HEK293 (cell line): ENCODE measurements at regions of chr1 and their contacts with region 1.

Region 1: GRCh38 chr1:114346480-114347029 is 164.4 kb downstream of the TRIM33 start:
- H3K4me3 ChIP-seq: peak overlapping the region; percentile 31
- H3K27ac ChIP-seq: no peak overlapping the region
- H3K4me1 ChIP-seq: no peaks in the 10 kb centered on the region
- CTCF ChIP-seq: peak; percentile 100

Region 2: DNA sequence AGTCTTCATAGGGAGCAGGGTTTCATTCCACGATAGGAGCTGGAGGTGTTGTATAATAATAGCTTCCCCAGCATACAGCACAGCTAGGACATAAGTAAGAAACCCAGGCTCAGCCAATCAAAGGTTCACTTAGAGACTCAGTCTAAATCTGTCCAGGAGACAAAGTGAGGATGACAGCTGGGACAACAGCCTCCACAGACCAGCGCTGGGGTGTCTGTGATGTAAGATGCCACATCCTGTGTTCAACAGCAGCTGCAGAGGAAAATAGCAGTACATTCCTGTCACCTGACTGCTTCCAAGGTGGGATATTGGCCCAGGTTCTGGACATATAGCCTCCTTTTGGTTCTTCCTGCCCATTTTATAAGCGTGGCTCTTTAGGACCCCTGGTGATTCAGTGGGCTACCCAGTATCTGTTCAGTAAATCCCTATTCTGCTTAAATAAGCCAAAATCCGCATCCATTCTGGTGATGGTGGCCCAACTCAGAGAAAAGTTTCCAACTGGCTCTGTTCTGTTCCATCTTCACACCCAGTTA is 16.0 kb before region 1 on chr1:
- CTCF ChIA-PET with region 1: interaction called, 16 read pairs
- POLR2A ChIA-PET with region 1: no interaction called
- H3K4me3 ChIP-seq: no peak overlapping the region
- H3K27ac ChIP-seq: no peak overlapping the region
- H3K4me1 ChIP-seq: no peaks in the 10 kb centered on the region
- CTCF ChIP-seq: no peak

Region 3: GRCh38 chr1:114336360-114336759 is 10.2 kb before region 1 on chr1:
- CTCF ChIA-PET with region 1: interaction called, 18 read pairs
- POLR2A ChIA-PET with region 1: no interaction called
- H3K4me3 ChIP-seq: no peak overlapping the region
- H3K27ac ChIP-seq: no peak overlapping the region
- H3K4me1 ChIP-seq: no peaks in the 10 kb centered on the region
- CTCF ChIP-seq: no peak

Region 4: DNA sequence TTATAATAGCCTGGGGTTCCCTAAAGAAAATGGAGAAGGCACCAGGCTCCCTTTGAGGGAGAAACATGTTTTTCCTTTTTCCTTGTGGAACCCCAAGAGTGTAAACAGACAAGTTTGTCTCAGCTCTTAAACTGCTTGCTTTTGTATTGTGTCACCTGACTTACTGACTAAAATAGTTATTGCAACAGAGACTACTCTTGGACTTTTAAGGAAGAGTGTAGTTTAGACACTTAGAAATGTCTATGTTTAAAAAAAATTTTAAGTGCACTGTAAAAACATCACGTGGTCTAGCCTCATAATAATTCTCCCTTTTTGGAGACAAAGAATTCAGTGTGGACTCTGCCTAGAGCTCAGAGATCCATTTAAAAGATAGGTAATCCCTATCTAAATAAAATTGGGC is 23.4 kb after region 1 on chr1:
- CTCF ChIA-PET with region 1: interaction called, 10 read pairs
- POLR2A ChIA-PET with region 1: no interaction called
- H3K4me3 ChIP-seq: no peak overlapping the region
- H3K27ac ChIP-seq: no peak overlapping the region
- H3K4me1 ChIP-seq: no peaks in the 10 kb centered on the region
- CTCF ChIP-seq: no peak

Region 5: DNA sequence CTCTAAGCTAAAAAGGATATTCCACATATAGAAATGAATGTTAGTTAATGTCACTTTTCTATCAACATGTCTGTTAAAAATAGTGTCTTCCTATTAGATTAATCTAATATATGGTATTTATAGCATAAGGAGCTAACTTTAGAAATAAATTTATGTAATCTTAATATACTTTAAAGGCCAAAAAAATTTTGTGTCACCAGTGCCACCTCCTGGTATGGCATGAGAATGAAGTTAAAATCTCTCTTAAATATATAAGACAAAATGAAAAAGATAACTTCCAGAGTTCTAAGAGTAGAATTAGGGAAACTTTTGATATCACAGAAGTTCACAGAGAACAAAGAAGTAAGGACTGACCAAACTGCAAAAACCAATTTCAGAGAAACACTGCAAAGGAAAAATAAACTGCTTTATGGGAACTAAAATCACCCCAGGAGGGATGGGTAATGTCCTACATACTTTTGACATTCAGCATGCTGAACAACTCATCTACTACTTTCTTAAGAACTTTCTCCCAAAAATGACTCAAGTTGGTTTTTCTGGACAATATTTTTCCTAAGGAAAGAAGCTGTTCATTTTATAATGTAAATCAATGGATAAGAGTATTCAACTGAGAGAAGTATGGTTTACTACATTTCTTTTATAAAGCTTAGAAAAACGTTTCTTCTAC is 81.7 kb after region 1 on chr1:
- CTCF ChIA-PET with region 1: interaction called, 25 read pairs
- POLR2A ChIA-PET with region 1: no interaction called
- H3K4me3 ChIP-seq: no peak overlapping the region
- H3K27ac ChIP-seq: no peak overlapping the region
- H3K4me1 ChIP-seq: no peaks in the 10 kb centered on the region
- CTCF ChIP-seq: no peak

Region 6: GRCh38 chr1:114472408-114472807 is 125.9 kb after region 1 on chr1:
- CTCF ChIA-PET with region 1: no interaction called
- POLR2A ChIA-PET with region 1: no interaction called
- H3K4me3 ChIP-seq: no peak overlapping the region
- H3K27ac ChIP-seq: no peak overlapping the region
- H3K4me1 ChIP-seq: no peaks in the 10 kb centered on the region
- CTCF ChIP-seq: no peak

Region 7: GRCh38 chr1:114558544-114558943 is 212.0 kb after region 1 on chr1:
- CTCF ChIA-PET with region 1: interaction called, 10 read pairs
- POLR2A ChIA-PET with region 1: no interaction called
- H3K4me3 ChIP-seq: no peak overlapping the region
- H3K27ac ChIP-seq: no peak overlapping the region
- H3K4me1 ChIP-seq: no peaks in the 10 kb centered on the region
- CTCF ChIP-seq: no peak